Psoas muscle (tissue), 8 donors: ENCODE measurements at regions of chr22 and their contacts with region 1.

Region 1: DNA sequence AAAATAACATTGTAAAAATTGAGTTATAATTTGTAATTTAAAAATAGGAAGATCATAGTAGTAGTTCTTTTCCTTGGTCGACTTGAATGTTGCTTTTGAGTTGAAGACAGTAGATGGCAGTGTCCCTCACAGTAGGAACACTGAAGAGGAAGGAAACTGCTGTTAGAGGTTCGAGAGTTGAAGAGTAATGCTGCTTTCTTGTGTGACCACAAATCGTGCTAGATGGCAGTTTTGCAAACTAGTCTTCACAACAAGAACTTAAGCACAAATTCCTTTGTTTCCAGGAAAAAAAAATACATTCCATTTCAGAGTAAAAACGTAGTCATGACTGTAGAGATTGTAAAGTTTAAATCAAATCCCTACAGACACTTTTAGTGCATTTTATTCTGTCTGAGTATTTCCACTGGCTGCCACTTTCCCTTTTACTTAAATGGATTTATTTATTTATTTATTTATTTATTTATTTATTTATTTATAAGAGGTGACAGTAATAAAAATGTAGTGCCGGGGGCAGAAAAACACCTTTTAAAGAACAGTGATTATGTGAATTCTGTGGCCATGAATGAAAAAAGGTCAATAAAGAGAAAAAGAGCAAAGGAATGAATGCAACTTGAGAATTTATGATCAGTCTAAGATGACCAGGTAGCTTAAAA is 54.6 kb downstream of the SPECC1L start:
- DNase-seq: no peak
- ATAC-seq: peak in 3 of 4 donors; percentile 76 to 81 (median 77)
- H3K4me3 ChIP-seq: no peak overlapping the region
- H3K27ac ChIP-seq: no peak overlapping the region
- H3K4me1 ChIP-seq: no peaks in the 10 kb centered on the region
- H3K27me3 ChIP-seq: no peaks in the 10 kb centered on the region
- CTCF ChIP-seq: peak; percentile 65

Region 2: DNA sequence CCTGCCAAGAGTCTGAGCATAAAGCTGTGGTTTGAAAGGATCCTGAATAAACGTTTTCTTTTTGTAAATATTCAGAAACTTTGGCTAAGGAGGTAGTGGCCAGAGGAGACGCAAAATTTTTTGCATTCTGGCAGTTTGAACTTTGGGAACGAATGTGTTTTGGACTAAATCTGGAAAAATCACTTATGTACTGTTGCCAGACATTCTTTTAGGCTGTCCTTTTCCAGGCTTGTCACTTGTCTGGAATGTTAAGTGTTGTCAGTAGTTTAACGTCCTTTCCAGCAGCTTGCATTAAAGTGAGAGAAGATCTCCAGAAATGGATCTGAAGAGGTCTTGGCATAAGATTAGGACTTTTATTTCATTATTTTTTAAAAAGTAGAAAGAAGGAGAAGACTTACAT is 36.1 kb before region 1 on chr22:
- intact Hi-C with region 1: no loop called
- DNase-seq: no peak
- ATAC-seq: peak in 3 of 4 donors; percentile 22 to 59 (median 38)
- H3K4me3 ChIP-seq: no peak overlapping the region
- H3K27ac ChIP-seq: peak overlapping the region; percentile 47
- H3K4me1 ChIP-seq: peaks cover 72% of the 10 kb centered on the region
- H3K27me3 ChIP-seq: no peaks in the 10 kb centered on the region
- CTCF ChIP-seq: no peak

Region 3: GRCh38 chr22:24338726-24339451 is 13.7 kb after region 1 on chr22:
- intact Hi-C with region 1: loop called in 1 of 2 experiments (anchors 1 kb)
- DNase-seq: peak; percentile 27 to 65
- ATAC-seq: peak; percentile 98 to 99 (median 98)
- H3K4me3 ChIP-seq: peak overlapping the region; percentile 45
- H3K27ac ChIP-seq: peak overlapping the region; percentile 83
- H3K4me1 ChIP-seq: peaks cover 18% of the 10 kb centered on the region
- H3K27me3 ChIP-seq: no peaks in the 10 kb centered on the region
- CTCF ChIP-seq: no peak

Region 4: DNA sequence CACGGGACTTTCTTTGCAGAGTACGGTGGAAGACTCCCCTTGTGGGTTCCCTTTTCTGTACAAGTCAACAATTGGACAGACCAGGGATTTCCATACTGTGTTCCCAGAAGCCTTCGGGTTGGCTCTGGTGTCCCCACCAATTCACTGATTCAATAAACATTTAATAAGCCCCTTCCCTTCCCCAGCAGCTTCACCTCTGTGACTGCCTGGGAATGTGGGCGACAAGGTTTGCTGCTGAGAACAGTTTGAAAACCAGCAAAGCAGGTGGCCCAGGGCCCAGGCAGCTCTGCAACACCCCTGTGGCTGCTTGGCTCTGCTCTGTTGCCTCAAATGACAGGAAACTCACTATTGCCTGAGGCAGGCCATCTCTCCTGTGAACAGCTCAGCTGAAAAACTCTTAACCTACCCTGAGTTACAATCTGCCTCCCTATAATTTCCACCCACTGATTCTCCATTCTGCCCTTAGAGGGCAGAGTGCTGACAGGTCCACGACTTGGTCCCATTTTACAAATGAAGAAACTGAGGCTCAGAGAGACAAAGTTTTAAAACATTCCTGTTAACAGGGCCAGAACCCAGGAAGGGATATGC is 112.6 kb after region 1 on chr22:
- intact Hi-C with region 1: no loop called
- DNase-seq: no peak
- ATAC-seq: no peak
- H3K4me3 ChIP-seq: no peak overlapping the region
- H3K27ac ChIP-seq: no peak overlapping the region
- H3K4me1 ChIP-seq: peaks cover 11% of the 10 kb centered on the region
- H3K27me3 ChIP-seq: no peaks in the 10 kb centered on the region
- CTCF ChIP-seq: no peak

Region 5: GRCh38 chr22:24503137-24503842 is 178.1 kb after region 1 on chr22:
- intact Hi-C with region 1: loop called (anchors 2 to 10 kb)
- DNase-seq: peak; percentile 52 to 74
- ATAC-seq: peak; percentile 66 to 79 (median 76)
- H3K4me3 ChIP-seq: no peak overlapping the region
- H3K27ac ChIP-seq: no peak overlapping the region
- H3K4me1 ChIP-seq: peaks cover 14% of the 10 kb centered on the region
- H3K27me3 ChIP-seq: no peaks in the 10 kb centered on the region
- CTCF ChIP-seq: peak; percentile 60

Region 6: DNA sequence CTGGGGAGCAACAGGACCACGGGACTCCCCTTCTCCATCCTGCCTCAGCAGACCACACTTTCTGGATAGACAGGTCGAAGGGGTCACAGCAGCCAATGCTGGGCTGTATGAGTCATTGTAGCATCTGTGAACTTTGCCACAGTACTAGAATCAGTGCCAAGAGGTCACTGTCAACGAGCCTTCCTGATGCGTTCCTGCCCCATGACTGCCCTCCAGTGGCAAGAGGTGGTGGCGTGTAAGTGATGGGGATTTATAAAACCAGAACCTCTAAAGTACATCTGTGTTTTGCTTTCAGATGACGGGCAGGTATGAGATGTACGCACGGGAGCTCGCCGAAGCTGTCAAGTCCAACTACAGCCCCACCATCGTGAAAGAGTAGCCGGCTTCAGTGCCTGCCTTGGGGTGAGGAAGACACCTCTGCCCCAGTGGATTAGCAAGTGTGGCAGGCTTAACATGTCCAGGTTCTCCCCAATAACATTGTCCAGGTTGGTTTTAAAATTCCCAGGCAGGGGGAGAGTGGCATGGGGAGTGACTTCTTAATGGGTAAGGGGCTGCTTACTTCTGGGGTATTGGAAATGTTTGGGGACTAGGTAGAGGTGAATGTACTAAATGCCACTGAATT is 200.3 kb after region 1 on chr22:
- intact Hi-C with region 1: loop called in 1 of 2 experiments (anchors 5 kb)
- DNase-seq: peak; percentile 78 to 86
- ATAC-seq: peak; percentile 77 to 88 (median 82)
- H3K4me3 ChIP-seq: no peak overlapping the region
- H3K27ac ChIP-seq: no peak overlapping the region
- H3K4me1 ChIP-seq: no peaks in the 10 kb centered on the region
- H3K27me3 ChIP-seq: no peaks in the 10 kb centered on the region
- CTCF ChIP-seq: peak; percentile 84